Upper lobe of right lung (tissue), 1 donor: ENCODE measurements at regions of chr4 and their contacts with region 1.

Region 1: DNA sequence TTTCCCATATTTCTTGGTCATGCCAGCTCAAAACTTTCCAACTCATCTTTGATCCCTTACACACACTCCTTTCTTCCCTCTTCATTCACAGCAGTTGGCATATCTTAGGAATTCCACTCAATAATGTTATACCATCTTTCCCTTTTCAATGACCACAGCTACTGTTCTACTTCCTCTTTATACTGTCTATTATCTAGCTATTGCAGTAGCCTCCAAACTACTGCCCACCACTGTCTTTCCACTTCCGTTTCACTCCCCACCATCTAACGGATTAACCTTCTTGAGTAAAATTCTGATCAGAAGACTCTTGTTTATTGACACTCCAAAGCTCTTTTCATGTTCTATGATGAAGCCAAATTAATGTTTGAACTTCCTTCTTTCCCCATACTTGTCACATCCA is 55.8 kb downstream of the ADAMTS3 start:
- DNase-seq: no peak
- ATAC-seq: no peak
- H3K4me3 ChIP-seq: no peak overlapping the region
- H3K27ac ChIP-seq: no peak overlapping the region
- H3K4me1 ChIP-seq: no peaks in the 10 kb centered on the region
- H3K27me3 ChIP-seq: no peaks in the 10 kb centered on the region
- CTCF ChIP-seq: no peak

Region 2: DNA sequence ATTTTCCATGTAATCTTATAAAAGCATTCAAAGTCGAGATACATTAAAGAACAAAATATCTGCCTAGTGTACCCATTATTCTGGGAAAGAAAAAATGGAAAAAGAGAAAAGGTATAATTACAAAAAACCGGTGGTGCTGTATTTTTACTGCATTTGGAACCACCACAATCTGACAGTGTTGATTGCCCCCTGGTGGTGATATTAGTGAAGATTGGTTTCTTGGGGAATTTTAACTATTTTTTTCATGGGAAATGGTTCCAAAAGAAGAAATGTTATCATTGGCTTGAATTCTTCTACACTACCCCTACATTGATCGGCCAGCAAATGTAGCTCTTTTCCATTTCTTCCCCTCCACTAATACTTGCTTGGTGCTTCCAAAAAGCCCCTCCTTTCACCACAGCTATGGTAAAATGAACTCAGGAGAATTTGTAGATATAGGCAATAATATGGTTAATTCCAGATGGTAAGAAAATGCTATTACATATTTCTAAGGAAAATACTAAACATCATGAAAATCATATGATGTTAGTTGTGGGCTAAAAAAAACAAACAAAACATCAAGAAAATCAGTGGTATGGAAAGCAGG is 506.3 kb after region 1 on chr4:
- intact Hi-C with region 1: loop called (anchors 5 kb)
- DNase-seq: no peak
- ATAC-seq: peak; percentile 47
- H3K4me3 ChIP-seq: no peak overlapping the region
- H3K27ac ChIP-seq: no peak overlapping the region
- H3K4me1 ChIP-seq: no peaks in the 10 kb centered on the region
- H3K27me3 ChIP-seq: no peaks in the 10 kb centered on the region
- CTCF ChIP-seq: peak; percentile 73